ENCODE measurements at regions of chr5 and their contacts with region 1.

Region 1: GRCh38 chr5:121949867-121950266 is 11.9 kb upstream of the SRFBP1 start:
- DNase-seq: peak; percentile 8 to 24
- H3K4me3 ChIP-seq: no peak overlapping the region
- H3K27ac ChIP-seq: no peak overlapping the region
- H3K4me1 ChIP-seq: no peaks in the 10 kb centered on the region
- H3K27me3 ChIP-seq: no peaks in the 10 kb centered on the region
- CTCF ChIP-seq: peak in 3 of 6 experiments; percentile 61 to 67 (median 63)
- POLR2A ChIP-seq: no peak

Region 2: GRCh38 chr5:120655828-120656435 is 1293.9 kb before region 1 on chr5:
- intact Hi-C with region 1: loop called (anchors 5 kb)
- DNase-seq: peak; percentile 46 to 59
- H3K4me3 ChIP-seq: no peak overlapping the region
- H3K27ac ChIP-seq: no peak overlapping the region
- H3K4me1 ChIP-seq: no peaks in the 10 kb centered on the region
- H3K27me3 ChIP-seq: no peaks in the 10 kb centered on the region
- CTCF ChIP-seq: peak in 4 of 6 experiments; percentile 27 to 69 (median 57)
- POLR2A ChIP-seq: no peak

Region 3: GRCh38 chr5:122311961-122312590 is 362.2 kb after region 1 on chr5 and contains the start of gene SNCAIP:
- intact Hi-C with region 1: no loop called
- DNase-seq: peak; percentile 57 to 58
- H3K4me3 ChIP-seq: peak within 1 kb of the TSS; percentile 20 to 59 (median 36)
- H3K27ac ChIP-seq: peak within 1 kb of the TSS in 2 of 3 donors; percentile 34 to 40
- H3K4me1 ChIP-seq: peaks cover 0 to 10% of the 10 kb centered on the region in 2 donors
- H3K27me3 ChIP-seq: no peaks in the 10 kb centered on the region
- CTCF ChIP-seq: no peak
- POLR2A ChIP-seq: peak in 1 of 2 donors; percentile 12
- total RNA-seq, gene SNCAIP: 4.0 to 12.8 (median 9.8) TPM

Measured in thyroid gland (tissue), 4 donors.